ENCODE measurements at regions of chr3 and their contacts with region 1.

Region 1: GRCh38 chr3:82133070-82133606 is 371.7 kb upstream of the GBE1 start:
- DNase-seq: peak; percentile 73
- H3K4me3 Mint-ChIP-seq: no peak overlapping the region
- H3K27ac Mint-ChIP-seq: no peak overlapping the region
- H3K4me1 Mint-ChIP-seq: no peaks in the 10 kb centered on the region
- H3K27me3 Mint-ChIP-seq: no peaks in the 10 kb centered on the region
- CTCF ChIP-seq: peak; percentile 56

Region 2: GRCh38 chr3:80929576-80929975 is 1203.6 kb before region 1 on chr3:
- CTCF ChIA-PET with region 1: no interaction called
- POLR2A ChIA-PET with region 1: no interaction called
- intact Hi-C with region 1: no loop called
- DNase-seq: no peak
- H3K4me3 Mint-ChIP-seq: no peak overlapping the region
- H3K27ac Mint-ChIP-seq: no peak overlapping the region
- H3K4me1 Mint-ChIP-seq: no peaks in the 10 kb centered on the region
- H3K27me3 Mint-ChIP-seq: no peaks in the 10 kb centered on the region
- CTCF ChIP-seq: no peak

Region 3: DNA sequence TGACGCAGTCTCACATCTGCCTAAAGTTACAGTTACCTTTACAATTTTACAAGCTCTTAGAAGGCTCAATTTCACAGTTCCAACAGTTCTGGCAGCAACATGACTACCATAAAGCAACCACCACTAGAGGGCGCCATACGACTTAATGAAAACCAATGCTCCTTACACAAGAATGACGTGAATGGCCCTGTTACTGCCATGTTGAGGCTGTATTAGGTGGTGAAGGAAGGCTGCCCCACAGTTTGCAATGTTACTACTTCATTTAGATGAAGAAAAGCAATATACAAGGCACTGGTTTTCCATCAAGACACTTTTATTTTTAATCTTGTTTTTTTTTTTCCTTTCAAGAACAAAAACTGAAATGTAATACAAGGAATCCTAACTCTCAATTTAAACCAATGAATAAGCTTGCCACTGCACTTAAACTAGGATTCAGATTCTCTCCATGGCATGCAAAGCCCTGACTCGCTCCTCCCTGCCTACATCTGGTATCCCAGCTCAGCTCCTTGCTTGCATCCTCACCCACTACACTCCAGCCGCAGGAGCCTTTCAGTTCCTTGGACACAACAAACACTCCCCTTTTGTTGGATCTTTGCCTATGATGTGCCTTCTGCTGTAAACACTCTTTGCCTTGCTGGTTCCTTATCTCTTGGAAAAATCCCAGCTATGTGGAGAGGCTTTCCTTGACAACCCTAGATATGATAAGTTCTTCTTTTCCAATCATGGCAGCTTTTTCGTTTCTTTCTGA is 642.4 kb before region 1 on chr3:
- CTCF ChIA-PET with region 1: interaction called, 3 read pairs
- POLR2A ChIA-PET with region 1: no interaction called
- intact Hi-C with region 1: loop called (anchors 10 kb)
- DNase-seq: peak; percentile 88
- H3K4me3 Mint-ChIP-seq: no peak overlapping the region
- H3K27ac Mint-ChIP-seq: peak overlapping the region; percentile 16
- H3K4me1 Mint-ChIP-seq: peaks cover 7% of the 10 kb centered on the region
- H3K27me3 Mint-ChIP-seq: no peaks in the 10 kb centered on the region
- CTCF ChIP-seq: peak; percentile 73

Region 4: GRCh38 chr3:81666493-81667121 is 466.5 kb before region 1 on chr3:
- CTCF ChIA-PET with region 1: interaction called, 25 read pairs
- POLR2A ChIA-PET with region 1: interaction called, 3 read pairs
- intact Hi-C with region 1: loop called (anchors 1 kb)
- DNase-seq: peak; percentile 39
- H3K4me3 Mint-ChIP-seq: no peak overlapping the region
- H3K27ac Mint-ChIP-seq: no peak overlapping the region
- H3K4me1 Mint-ChIP-seq: no peaks in the 10 kb centered on the region
- H3K27me3 Mint-ChIP-seq: no peaks in the 10 kb centered on the region
- CTCF ChIP-seq: peak; percentile 67

Region 5: DNA sequence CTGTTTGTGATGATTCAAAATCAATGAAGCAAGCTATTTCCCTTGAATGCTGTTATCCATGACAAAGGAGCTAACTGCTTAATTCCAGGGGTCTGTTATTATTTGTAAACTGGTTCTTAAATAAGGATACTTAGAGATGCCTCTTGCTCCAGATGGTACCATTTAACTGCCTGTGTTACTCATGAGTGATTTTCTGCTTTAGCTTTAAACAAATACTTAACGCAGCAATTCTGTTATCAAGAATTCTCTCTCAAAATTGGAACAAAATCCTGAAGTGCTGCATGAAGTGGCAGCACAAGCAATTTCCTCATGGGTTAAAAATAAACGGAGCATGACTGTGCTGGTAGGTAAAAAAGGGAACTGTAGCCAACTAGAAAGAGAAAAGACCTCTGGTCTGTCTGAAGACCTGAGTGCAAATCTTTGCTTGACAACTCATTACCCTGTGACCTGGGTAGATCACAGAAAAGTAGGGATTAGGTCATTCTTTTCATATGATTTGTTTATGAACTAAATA is 309.2 kb before region 1 on chr3:
- CTCF ChIA-PET with region 1: no interaction called
- POLR2A ChIA-PET with region 1: no interaction called
- intact Hi-C with region 1: no loop called
- DNase-seq: no peak
- H3K4me3 Mint-ChIP-seq: no peak overlapping the region
- H3K27ac Mint-ChIP-seq: no peak overlapping the region
- H3K4me1 Mint-ChIP-seq: no peaks in the 10 kb centered on the region
- H3K27me3 Mint-ChIP-seq: no peaks in the 10 kb centered on the region
- CTCF ChIP-seq: no peak

Region 6: GRCh38 chr3:81910244-81910852 is 222.8 kb before region 1 on chr3:
- CTCF ChIA-PET with region 1: interaction called, 42 read pairs
- POLR2A ChIA-PET with region 1: no interaction called
- intact Hi-C with region 1: loop called (anchors 2 kb)
- DNase-seq: peak; percentile 69
- H3K4me3 Mint-ChIP-seq: no peak overlapping the region
- H3K27ac Mint-ChIP-seq: no peak overlapping the region
- H3K4me1 Mint-ChIP-seq: no peaks in the 10 kb centered on the region
- H3K27me3 Mint-ChIP-seq: no peaks in the 10 kb centered on the region
- CTCF ChIP-seq: peak; percentile 67

Region 7: DNA sequence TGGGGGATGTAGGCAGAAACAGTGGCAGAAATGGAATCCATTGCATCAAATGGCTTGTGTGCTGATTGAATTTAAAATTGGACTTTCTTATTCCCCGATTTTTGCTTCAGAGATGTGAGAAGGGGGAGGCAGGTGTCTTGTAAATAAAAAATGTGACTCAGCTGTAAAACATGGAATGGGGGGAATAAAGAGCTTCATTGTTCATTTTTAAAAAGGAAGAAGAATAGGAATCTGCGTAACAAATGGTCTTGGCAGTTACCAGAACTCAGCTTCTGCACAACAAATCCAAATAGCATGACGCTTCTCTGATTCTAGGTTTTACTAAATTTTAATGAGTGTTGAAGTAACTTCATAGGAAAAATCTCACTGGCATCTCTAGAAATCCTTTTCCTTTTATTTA is 47.8 kb before region 1 on chr3:
- CTCF ChIA-PET with region 1: interaction called, 11 read pairs
- POLR2A ChIA-PET with region 1: no interaction called
- intact Hi-C with region 1: no loop called
- DNase-seq: no peak
- H3K4me3 Mint-ChIP-seq: no peak overlapping the region
- H3K27ac Mint-ChIP-seq: no peak overlapping the region
- H3K4me1 Mint-ChIP-seq: peaks cover 13% of the 10 kb centered on the region
- H3K27me3 Mint-ChIP-seq: no peaks in the 10 kb centered on the region
- CTCF ChIP-seq: no peak

Region 8: GRCh38 chr3:82143661-82144412 is 10.7 kb after region 1 on chr3:
- CTCF ChIA-PET with region 1: interaction called, 30 read pairs
- POLR2A ChIA-PET with region 1: no interaction called
- intact Hi-C with region 1: no loop called
- DNase-seq: peak; percentile 14
- H3K4me3 Mint-ChIP-seq: no peak overlapping the region
- H3K27ac Mint-ChIP-seq: no peak overlapping the region
- H3K4me1 Mint-ChIP-seq: peaks cover 5% of the 10 kb centered on the region
- H3K27me3 Mint-ChIP-seq: no peaks in the 10 kb centered on the region
- CTCF ChIP-seq: no peak

Region 9: GRCh38 chr3:82311901-82312300 is 178.8 kb after region 1 on chr3:
- CTCF ChIA-PET with region 1: no interaction called
- POLR2A ChIA-PET with region 1: no interaction called
- intact Hi-C with region 1: no loop called
- DNase-seq: peak; percentile 1
- H3K4me3 Mint-ChIP-seq: no peak overlapping the region
- H3K27ac Mint-ChIP-seq: no peak overlapping the region
- H3K4me1 Mint-ChIP-seq: no peaks in the 10 kb centered on the region
- H3K27me3 Mint-ChIP-seq: no peaks in the 10 kb centered on the region
- CTCF ChIP-seq: no peak

Measured in MCF 10A (cell line).